ENCODE measurements at regions of chr16 and their contacts with region 1.

Region 1: DNA sequence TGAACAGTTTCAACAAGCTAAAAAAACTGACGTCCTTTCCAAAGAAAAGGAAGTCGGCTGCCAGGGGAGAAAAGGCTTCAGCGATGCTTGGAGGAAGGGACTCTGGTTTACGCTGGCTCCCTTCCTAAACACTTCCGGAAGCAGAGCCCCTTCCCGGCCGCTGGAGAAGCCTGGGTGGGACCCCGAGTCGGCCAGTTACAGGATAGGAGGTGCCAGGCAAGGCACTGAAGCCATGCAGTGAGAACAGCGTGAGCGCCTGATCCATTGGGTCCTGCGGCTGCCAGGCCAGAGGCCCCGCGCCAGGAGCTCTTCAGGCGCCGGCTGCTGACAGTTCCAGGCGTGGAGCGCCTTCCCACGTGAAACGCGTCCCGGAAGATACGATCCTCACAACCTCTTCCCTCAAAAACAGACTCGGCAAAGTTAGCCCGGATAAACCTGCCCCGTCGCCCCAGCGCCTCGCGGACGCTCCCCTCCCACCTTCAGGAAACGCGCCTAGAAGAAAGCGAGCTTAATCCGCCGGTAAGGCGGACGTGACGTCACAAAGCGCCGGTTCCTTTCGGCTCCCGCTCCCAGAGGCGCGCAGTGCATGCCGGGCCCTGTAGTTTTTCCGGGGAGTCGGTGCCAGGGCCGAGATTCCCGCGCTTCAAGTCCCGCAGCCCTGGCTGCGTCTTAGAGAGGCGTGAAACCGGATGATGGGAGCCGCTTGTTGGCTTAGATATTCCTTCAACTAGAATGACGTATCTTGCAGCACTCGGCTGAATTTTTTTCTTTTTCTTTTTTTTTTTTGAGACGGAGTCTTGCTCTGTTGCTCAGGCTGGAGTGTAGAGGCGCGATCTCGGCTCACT is at the start of gene ADAT1:
- DNase-seq: peak; percentile 99
- H3K4me3 ChIP-seq: peak within 1 kb of the TSS; percentile 49 to 96 (median 94)
- H3K27ac ChIP-seq: peak within 1 kb of the TSS; percentile 75
- H3K4me1 ChIP-seq: peaks cover 24% of the 10 kb centered on the region
- H3K27me3 ChIP-seq: no peaks in the 10 kb centered on the region
- CTCF ChIP-seq: no peak
- POLR2A ChIP-seq: peak; percentile 95
- total RNA-seq, gene ADAT1: 56.6 and 57.9 TPM in 2 replicates

Region 2: GRCh38 chr16:75432828-75433731 is 189.9 kb before region 1 on chr16 and contains the start of gene CFDP1:
- CTCF ChIA-PET with region 1: interaction called, 3 read pairs
- POLR2A ChIA-PET with region 1: interaction called, 4 read pairs
- dilution Hi-C with region 1: no loop called
- intact Hi-C with region 1: loop called (anchors 1 kb)
- DNase-seq: peak; percentile 94
- H3K4me3 ChIP-seq: peak within 1 kb of the TSS; percentile 37 to 81 (median 72)
- H3K27ac ChIP-seq: peak within 1 kb of the TSS; percentile 91
- H3K4me1 ChIP-seq: peaks cover 10% of the 10 kb centered on the region
- H3K27me3 ChIP-seq: no peaks in the 10 kb centered on the region
- CTCF ChIP-seq: no peak
- POLR2A ChIP-seq: peak; percentile 73
- total RNA-seq, gene CFDP1: 49.6 and 53.8 TPM in 2 replicates

Region 3: GRCh38 chr16:75555707-75556430 is 67.1 kb before region 1 on chr16 and contains the start of gene TMEM231:
- CTCF ChIA-PET with region 1: interaction called, 3 read pairs
- POLR2A ChIA-PET with region 1: no interaction called
- dilution Hi-C with region 1: no loop called
- intact Hi-C with region 1: loop called (anchors 1 kb)
- DNase-seq: peak; percentile 91
- H3K4me3 ChIP-seq: peak within 1 kb of the TSS; percentile 75 to 86 (median 80)
- H3K27ac ChIP-seq: peak within 1 kb of the TSS; percentile 46
- H3K4me1 ChIP-seq: peaks cover 12% of the 10 kb centered on the region
- H3K27me3 ChIP-seq: peaks cover 9 to 14% of the 10 kb centered on the region in 2 experiments
- CTCF ChIP-seq: no peak
- POLR2A ChIP-seq: no peak
- total RNA-seq, gene TMEM231: 9.4 and 10.0 TPM in 2 replicates

Region 4: DNA sequence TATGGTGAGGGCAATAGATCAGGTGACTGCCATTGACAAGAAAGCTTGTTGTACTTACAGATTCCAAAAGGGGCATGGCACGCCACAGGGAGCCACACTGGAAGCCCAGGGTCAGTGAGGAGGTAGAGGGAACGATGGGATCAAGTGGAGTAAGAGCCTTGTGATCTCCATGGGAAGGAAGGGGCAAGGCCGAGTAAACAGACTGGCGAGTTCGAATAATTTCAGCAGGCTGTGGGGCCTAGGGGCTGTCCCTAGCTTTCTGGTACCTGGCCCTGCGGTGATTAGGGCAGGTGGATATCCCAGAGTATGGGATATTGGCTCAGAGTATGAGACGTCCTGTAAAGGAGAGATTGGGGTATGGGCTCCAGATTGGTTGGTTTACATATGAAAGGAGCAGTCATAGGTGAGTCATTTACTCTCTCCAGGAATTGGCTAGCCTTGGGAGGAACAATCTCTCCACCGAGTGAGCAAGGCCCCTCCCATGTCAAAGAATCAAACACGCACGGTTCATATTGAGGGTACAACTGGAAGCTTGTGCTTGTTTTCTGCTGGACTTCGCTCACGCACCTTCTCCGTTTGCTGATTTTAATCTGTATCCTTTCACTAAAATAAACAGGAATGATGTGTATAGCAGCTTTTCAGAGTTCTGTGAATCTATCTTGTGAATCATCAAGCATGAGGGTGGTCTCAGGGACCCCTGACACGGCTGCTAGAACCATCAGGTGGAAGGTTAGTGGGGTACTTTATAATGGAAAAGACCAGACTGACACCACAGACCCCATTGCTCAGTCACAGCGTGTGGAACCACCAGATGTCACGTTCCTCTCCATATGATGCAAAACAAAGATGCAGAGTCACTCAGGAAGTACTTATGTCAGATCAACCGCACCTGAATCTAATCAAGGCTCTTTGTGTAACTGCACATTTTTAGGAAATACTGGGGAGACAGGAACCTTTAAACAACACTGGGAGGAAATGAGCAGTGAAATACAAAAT is 28.9 kb before region 1 on chr16:
- CTCF ChIA-PET with region 1: interaction called, 3 read pairs
- POLR2A ChIA-PET with region 1: no interaction called
- dilution Hi-C with region 1: no loop called
- intact Hi-C with region 1: loop called (anchors 2 kb)
- DNase-seq: peak; percentile 48
- H3K4me3 ChIP-seq: no peak overlapping the region
- H3K27ac ChIP-seq: peak overlapping the region; percentile 93
- H3K4me1 ChIP-seq: peaks cover 16% of the 10 kb centered on the region
- H3K27me3 ChIP-seq: no peaks in the 10 kb centered on the region
- CTCF ChIP-seq: no peak
- POLR2A ChIP-seq: no peak

Region 5: GRCh38 chr16:75764154-75764768 is 141.3 kb after region 1 on chr16:
- CTCF ChIA-PET with region 1: interaction called, 5 read pairs
- POLR2A ChIA-PET with region 1: no interaction called
- dilution Hi-C with region 1: no loop called
- intact Hi-C with region 1: loop called (anchors 1 kb)
- DNase-seq: peak; percentile 64
- H3K4me3 ChIP-seq: no peak overlapping the region
- H3K27ac ChIP-seq: no peak overlapping the region
- H3K4me1 ChIP-seq: no peaks in the 10 kb centered on the region
- H3K27me3 ChIP-seq: peaks cover 0 to 4% of the 10 kb centered on the region in 2 experiments
- CTCF ChIP-seq: peak; percentile 60 to 68
- POLR2A ChIP-seq: no peak